Activated naive CD4-positive, alpha-beta T cell treated with anti-CD3 and anti-CD28 coated beads, Interleukin-2, amount 10 ng/mL, durations not matched to agents 7 days and 5 days (primary cell): ENCODE measurements at regions of chr1 and their contacts with region 1.

Region 1: DNA sequence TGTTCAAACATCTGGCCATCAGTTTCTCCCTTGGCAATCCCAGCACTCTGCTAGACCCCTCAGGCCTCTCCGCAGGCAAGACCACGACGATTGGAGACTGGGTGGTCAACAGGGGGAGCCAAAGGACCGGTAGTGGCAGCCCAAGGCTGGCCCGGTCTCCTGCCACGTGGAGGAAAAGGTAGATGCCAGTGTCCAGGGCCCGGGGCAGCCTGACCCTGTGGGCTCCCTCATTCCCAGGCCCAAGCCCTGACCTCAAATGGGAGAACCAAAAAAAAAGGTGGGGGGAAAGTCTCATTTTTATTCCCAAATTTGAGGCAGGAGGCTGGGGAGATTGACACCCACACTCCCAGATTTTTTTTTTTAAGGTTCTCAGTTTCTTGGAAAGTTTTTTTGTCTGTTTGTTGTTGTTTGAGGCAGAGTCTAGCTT is 24.8 kb downstream of the S100A6 start:
- DNase-seq: peak; percentile 86
- H3K4me3 Mint-ChIP-seq: no peak overlapping the region
- H3K27ac Mint-ChIP-seq: no peak overlapping the region
- H3K4me1 Mint-ChIP-seq: peaks cover 21% of the 10 kb centered on the region
- H3K27me3 Mint-ChIP-seq: peaks cover 11% of the 10 kb centered on the region

Region 2: GRCh38 chr1:153526132-153526543 is 15.1 kb after region 1 on chr1:
- CTCF ChIA-PET with region 1: interaction called, 36 read pairs
- DNase-seq: no peak
- H3K4me3 Mint-ChIP-seq: no peak overlapping the region
- H3K27ac Mint-ChIP-seq: no peak overlapping the region
- H3K4me1 Mint-ChIP-seq: peaks cover 12% of the 10 kb centered on the region
- H3K27me3 Mint-ChIP-seq: peaks cover 7% of the 10 kb centered on the region

Region 3: DNA sequence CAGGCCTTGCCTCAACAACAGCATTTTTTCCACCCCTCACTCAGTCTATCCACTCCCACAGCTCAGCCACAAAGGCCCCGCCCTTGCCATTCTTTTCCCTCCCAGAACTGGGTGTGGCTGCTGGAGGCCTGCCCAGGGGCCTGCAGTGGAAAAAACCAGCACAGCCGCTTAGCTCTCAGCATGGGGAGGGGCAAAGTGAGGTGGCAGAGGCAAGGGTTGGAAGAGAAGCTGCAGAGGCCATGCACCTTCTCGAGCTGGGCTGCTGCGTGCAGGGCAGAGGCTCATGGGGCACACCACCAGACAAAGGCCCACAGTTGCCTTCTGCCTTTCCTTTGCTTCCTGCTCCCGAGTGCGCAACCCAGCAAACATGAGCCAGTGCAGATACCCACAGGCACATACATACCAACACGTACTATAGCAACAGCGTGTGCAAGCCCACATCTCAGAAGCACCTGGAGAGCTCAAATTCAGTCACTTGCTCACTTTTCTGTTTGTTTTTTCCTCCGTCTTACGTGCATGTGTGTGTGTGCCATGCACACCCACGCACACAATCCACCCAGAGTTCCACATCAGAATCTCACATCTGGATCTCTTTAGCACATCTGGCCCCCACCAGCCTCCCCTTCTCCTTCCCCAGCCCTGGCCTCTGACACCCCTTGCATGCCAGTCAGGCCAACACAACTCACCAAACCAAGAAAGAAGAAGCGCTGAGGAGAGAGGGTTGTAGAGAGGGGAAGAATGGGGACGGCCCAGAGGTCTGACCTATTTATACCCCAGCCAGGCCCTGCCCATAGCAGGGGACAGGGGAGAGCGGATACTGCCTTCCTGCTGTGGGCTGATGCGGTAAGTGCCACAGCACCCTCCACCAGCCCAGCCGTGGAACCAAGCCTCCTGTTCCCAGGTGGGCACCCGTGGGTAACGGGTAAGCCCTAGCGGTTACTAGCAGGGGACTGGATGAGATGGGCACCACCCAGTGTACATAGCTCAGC is 34.4 kb after region 1 on chr1 and contains the start of gene S100A4:
- CTCF ChIA-PET with region 1: interaction called, 13 read pairs
- DNase-seq: peak; percentile 96
- H3K4me3 Mint-ChIP-seq: peak within 1 kb of the TSS; percentile 93
- H3K27ac Mint-ChIP-seq: peak within 1 kb of the TSS; percentile 99
- H3K4me1 Mint-ChIP-seq: peaks cover 94% of the 10 kb centered on the region
- H3K27me3 Mint-ChIP-seq: peaks cover 18% of the 10 kb centered on the region

Region 4: GRCh38 chr1:153572569-153573015 is 61.6 kb after region 1 on chr1:
- CTCF ChIA-PET with region 1: interaction called, 116 read pairs
- DNase-seq: peak; percentile 77
- H3K4me3 Mint-ChIP-seq: no peak overlapping the region
- H3K27ac Mint-ChIP-seq: no peak overlapping the region
- H3K4me1 Mint-ChIP-seq: peaks cover 36% of the 10 kb centered on the region
- H3K27me3 Mint-ChIP-seq: peaks cover 32% of the 10 kb centered on the region

Region 5: GRCh38 chr1:153617675-153618074 is 106.7 kb after region 1 on chr1:
- CTCF ChIA-PET with region 1: interaction called, 24 read pairs
- DNase-seq: peak; percentile 79
- H3K4me3 Mint-ChIP-seq: no peak overlapping the region
- H3K27ac Mint-ChIP-seq: no peak overlapping the region
- H3K4me1 Mint-ChIP-seq: peaks cover 3% of the 10 kb centered on the region
- H3K27me3 Mint-ChIP-seq: peaks cover 13% of the 10 kb centered on the region